ENCODE measurements at regions of chr1 and their contacts with region 1.

Region 1: DNA sequence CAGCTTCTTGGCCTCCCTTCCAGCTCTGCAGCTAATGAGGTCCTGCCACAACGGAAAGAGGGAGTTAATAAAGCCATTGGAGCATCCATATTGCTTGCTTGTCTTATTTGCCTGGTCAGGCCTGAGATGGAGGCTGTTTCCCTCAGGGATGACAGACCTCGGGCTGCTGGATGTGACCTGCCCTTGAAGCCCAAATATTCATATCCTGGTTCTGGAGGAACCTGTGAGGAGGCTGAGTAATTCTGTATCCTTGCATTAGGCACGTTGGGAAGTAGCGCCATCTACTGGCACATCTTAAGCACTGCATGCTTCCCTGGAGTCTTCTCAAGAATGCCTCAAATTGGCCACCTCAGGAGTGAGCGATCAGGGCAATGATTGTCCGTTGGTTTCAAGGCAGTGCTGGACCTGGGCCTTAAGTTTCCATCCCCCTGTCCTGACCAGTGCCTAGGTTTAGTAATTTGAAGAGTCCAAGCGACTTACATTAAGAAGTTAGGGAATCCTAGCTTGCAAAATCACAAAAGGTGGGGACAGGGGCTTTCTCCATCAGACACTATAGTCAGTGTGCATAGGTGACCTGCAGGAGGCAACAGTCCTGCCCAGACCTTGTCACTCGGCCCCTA is 13.8 kb upstream of the NASP start:
- DNase-seq: peak; percentile 74
- ATAC-seq: peak; percentile 82

Region 2: GRCh38 chr1:45339789-45340570 is 230.1 kb before region 1 on chr1 and contains the starts of genes MUTYH and TOE1:
- intact Hi-C with region 1: loop called (anchors 10 kb)
- DNase-seq: peak; percentile 98
- ATAC-seq: peak; percentile 96
- total RNA-seq, gene MUTYH: 8.3 TPM
- total RNA-seq, gene TOE1: 3.8 TPM

Region 3: GRCh38 chr1:45359882-45360513 is 210.1 kb before region 1 on chr1:
- intact Hi-C with region 1: loop called (anchors 1 kb)
- DNase-seq: no peak
- ATAC-seq: peak; percentile 81

Region 4: GRCh38 chr1:45393718-45394302 is 176.3 kb before region 1 on chr1:
- intact Hi-C with region 1: no loop called
- DNase-seq: peak; percentile 68
- ATAC-seq: no peak

Region 5: GRCh38 chr1:45521398-45522323 is 48.4 kb before region 1 on chr1 and contains the start of gene PRDX1:
- intact Hi-C with region 1: loop called (anchors 5 kb)
- DNase-seq: peak; percentile 96
- ATAC-seq: peak; percentile 96
- total RNA-seq, gene PRDX1: 314 TPM

Measured in Right ventricle myocardium inferior (tissue), 1 donor.